ENCODE measurements at regions of chr5 and their contacts with region 1.

Region 1: DNA sequence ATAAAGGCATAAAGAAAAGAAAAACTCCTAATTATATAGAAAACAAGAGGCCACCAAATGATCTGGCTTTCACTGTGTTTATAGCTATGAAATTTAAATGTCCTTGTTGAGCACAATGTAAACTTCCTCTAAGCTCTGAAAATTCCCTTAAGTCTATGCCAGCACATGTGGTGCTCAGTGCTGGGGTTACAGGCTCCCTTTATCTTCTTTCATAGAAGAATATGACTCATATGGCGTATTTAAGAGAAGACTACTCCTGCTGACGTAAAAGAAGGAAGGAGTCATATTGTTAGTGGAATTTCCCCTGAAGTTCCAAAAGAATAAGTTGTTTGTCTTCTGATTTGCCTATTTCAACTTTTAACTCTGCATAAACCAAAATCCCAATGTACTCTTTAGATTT is 30.4 kb downstream of the RNF145 start:
- DNase-seq: peak; percentile 97
- H3K4me3 ChIP-seq: peak overlapping the region in 1 of 3 experiments; percentile 29
- H3K27ac ChIP-seq: peak overlapping the region; percentile 90
- H3K4me1 ChIP-seq: peaks cover 30% of the 10 kb centered on the region
- H3K27me3 ChIP-seq: no peaks in the 10 kb centered on the region
- CTCF ChIP-seq: no peak
- POLR2A ChIP-seq: peak; percentile 34

Region 2: DNA sequence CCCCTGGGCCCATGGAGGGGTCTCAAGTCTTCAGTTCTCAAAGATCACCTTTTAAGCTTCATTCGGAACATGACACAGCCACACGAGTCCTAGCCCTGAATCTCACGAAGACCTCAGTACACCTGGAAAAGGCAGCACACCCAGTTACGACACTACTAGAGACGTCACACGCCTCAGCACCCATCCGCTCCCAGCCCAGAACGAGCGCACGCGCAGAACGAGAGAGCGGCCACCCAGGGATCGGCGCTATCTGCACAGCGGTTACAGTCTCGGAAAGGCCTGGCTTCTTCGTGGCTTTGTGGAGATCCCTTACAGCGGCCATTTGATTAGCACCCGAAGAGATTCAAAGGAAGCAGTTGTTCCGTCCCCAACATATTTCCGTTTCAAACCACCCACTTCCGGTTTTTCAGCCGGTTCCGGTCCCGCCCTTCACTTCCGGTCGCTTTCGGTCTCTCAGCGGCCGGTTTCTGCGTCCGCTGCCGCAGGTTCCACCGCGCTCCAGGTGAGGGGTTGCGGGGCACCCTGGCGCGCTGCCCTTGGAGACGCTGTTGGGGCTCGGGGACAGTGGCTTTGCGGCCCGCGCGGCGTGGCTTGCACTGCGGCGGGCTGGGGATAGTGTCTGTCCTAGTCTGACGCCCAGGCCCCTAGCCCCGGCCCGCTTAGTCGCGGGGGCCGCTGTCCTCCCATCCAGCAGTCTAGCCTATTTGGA is 84.0 kb after region 1 on chr5 and contains the start of gene UBLCP1:
- CTCF ChIA-PET with region 1: no interaction called
- POLR2A ChIA-PET with region 1: no interaction called
- dilution Hi-C with region 1: no loop called
- intact Hi-C with region 1: loop called (anchors 1 kb)
- DNase-seq: peak; percentile 67
- H3K4me3 ChIP-seq: peak within 1 kb of the TSS; percentile 13 to 84 (median 63)
- H3K27ac ChIP-seq: peak within 1 kb of the TSS; percentile 34
- H3K4me1 ChIP-seq: peaks cover 11% of the 10 kb centered on the region
- H3K27me3 ChIP-seq: peaks cover 0 to 2% of the 10 kb centered on the region in 2 experiments
- CTCF ChIP-seq: no peak
- POLR2A ChIP-seq: peak; percentile 77
- total RNA-seq, gene UBLCP1: 18.2 and 20.3 TPM in 2 replicates

Region 3: GRCh38 chr5:160008877-160009590 is 830.1 kb after region 1 on chr5 and contains the start of gene TTC1:
- CTCF ChIA-PET with region 1: no interaction called
- POLR2A ChIA-PET with region 1: no interaction called
- dilution Hi-C with region 1: no loop called
- intact Hi-C with region 1: loop called (anchors 10 kb)
- DNase-seq: peak; percentile 98
- H3K4me3 ChIP-seq: peak within 1 kb of the TSS; percentile 62 to 97 (median 93)
- H3K27ac ChIP-seq: peak within 1 kb of the TSS; percentile 89
- H3K4me1 ChIP-seq: peaks cover 13% of the 10 kb centered on the region
- H3K27me3 ChIP-seq: peaks cover 0 to 3% of the 10 kb centered on the region in 2 experiments
- CTCF ChIP-seq: no peak
- POLR2A ChIP-seq: peak; percentile 95
- total RNA-seq, gene TTC1: 59.6 and 62.6 TPM in 2 replicates